T-cell (primary cell): ENCODE measurements at regions of chr3 and their contacts with region 1.

Region 1: DNA sequence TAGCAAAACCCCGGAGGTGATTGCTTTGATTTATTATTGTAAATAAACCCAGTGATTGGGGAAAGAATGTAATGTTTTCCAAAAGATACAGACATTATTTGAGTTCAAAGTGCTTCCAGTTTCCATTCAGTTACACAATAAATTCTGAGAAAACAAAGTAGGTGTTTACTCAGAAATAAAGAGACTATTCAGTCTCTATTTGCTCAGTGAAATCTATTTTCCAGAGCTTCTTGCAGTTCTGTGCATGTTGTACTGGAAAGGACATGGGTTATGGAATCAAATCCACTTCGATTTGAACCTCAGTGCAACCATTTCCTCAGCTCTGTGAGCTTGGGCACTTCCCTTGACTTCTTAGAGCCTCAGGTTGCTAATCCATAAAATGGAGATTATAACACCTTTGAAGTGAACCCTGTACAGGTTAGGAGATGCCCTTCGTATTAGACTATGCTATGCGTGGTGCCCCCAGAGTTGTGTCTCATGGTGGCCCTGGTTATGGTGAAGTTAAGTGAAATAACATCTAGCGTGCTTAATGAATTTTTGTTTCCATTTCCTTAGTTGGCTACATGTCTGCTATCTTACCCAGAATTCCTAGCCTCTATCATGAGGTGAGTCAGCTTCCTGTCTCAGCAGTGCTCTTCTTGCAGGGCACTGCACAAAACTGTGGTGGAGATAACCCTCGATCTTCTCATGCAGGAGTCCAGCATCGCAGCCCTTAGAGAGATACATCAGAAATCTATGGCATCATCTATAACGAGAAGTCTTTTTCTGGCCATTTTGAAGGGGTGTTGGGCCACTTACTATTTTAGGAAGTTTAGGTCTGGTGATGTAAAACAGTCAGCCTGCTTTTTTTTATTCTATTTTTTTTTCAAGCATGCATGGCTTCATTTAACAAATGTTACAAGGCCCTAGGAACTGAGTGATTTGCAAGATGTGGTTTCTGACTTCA is 97.7 kb downstream of the RPL39L start:
- DNase-seq: peak in 21 of 35 experiments; percentile 21 to 78 (median 36)
- ATAC-seq: peak; percentile 93 to 97 (median 95)
- H3K4me3 ChIP-seq: peak overlapping the region; percentile 5 to 8
- H3K4me3 Mint-ChIP-seq: peak overlapping the region; percentile 45 to 75 (median 63)
- H3K27ac ChIP-seq: peak overlapping the region; percentile 88
- H3K27ac Mint-ChIP-seq: peak overlapping the region; percentile 90 to 96
- H3K4me1 ChIP-seq: peaks cover 66 to 71% of the 10 kb centered on the region in 2 experiments
- H3K4me1 Mint-ChIP-seq: peaks cover 83 to 87% (median 86%) of the 10 kb centered on the region in 3 donors
- H3K27me3 ChIP-seq: no peaks in the 10 kb centered on the region
- H3K27me3 Mint-ChIP-seq: no peaks in the 10 kb centered on the region

Region 2: GRCh38 chr3:187016639-187017345 is 24.8 kb before region 1 on chr3:
- CTCF ChIA-PET with region 1: interaction called in 1 of 2 experiments, 14 read pairs
- POLR2A ChIA-PET with region 1: interaction called in 1 of 2 experiments, 17 read pairs
- DNase-seq: no peak
- ATAC-seq: no peak
- H3K4me3 ChIP-seq: no peak overlapping the region
- H3K4me3 Mint-ChIP-seq: peak overlapping the region in 1 of 3 donors; percentile 32
- H3K27ac ChIP-seq: no peak overlapping the region
- H3K27ac Mint-ChIP-seq: peak overlapping the region; percentile 80 to 81
- H3K4me1 ChIP-seq: peaks cover 15 to 54% of the 10 kb centered on the region in 2 experiments
- H3K4me1 Mint-ChIP-seq: peaks cover 84 to 93% (median 85%) of the 10 kb centered on the region in 3 donors
- H3K27me3 ChIP-seq: no peaks in the 10 kb centered on the region
- H3K27me3 Mint-ChIP-seq: no peaks in the 10 kb centered on the region